ENCODE measurements at regions of chr19 and their contacts with region 1.

Region 1: DNA sequence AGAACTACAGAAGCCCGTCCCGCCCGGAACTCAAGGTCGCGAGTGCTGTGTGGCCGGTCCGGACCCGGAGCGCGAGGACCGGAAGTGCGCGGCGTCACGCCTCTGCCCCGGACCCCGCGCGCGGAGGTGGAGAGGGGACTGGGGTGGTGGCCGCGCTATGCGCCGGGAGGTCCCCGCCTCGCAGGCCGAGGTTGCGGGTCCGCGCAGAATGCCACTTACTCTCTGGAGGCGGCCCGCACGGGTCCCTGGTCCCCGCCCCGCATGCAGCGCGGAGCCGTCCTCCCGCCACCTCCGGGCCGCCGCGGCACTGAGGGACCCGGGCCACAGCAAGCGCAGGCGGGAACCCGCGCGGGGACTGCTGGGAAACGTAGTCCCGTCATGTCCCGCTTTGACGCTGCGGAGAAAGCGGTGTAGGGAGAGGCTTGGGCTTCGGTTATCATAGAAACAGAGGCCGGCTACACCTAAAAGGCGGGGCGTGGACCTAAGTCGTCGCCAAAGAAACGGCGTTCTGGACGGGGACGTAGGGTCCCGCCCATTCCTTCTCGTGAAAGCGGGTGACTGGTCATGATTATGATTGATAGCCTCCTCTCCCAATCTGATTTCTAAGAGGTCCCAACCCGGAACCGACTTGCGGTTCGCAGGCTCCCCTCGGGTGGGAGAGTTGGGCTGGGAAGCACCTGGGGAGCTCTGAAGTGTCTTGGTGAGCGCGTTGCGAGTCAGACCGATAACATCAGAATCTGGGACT is at the start of gene ZNF837:
- DNase-seq: peak; percentile 98 to 100
- H3K4me3 ChIP-seq: peak within 1 kb of the TSS; percentile 66 to 90
- H3K27ac ChIP-seq: peak within 1 kb of the TSS; percentile 87 to 95
- H3K4me1 ChIP-seq: peaks cover 6 to 33% (median 29%) of the 10 kb centered on the region in 4 donors
- H3K27me3 ChIP-seq: no peaks in the 10 kb centered on the region
- CTCF ChIP-seq: peak in 1 of 2 experiments; percentile 30

Region 2: DNA sequence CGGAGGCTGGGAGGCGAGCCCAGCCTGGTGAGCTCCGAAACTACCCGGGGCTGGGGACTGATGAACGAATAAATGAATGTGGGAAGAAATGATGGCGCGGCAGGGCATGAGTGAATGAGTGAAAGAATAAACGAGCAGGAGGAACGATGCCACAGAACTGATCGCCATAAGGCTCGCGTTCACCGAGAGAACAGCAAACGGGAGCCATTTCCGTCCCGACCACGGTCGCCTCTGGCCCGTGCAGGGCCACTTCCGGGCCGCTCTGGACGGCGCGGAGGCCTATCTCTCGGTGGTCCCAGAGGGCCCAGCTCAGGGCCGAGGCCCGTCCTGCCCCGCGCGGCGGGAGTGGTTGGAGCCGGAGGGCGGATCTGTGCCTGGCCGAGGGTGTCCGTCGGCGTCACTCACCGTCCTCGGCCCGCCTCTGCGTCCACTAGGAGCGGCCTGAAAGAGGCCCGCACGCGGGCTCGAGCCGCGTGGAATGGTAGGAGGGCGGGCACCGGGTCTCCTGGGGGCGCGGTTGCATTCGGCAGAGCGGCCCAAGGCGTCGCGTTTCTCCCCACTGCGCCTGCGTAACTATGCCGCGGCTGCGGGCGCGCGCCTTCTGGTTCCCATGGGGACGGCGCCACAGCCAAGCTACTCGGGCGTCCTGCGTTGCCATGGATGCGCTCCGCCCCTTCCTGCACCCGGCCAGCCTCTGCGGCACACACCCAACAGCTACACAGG is 18.5 kb before region 1 on chr19 and contains the start of gene ZNF497:
- intact Hi-C with region 1: loop called (anchors 2 kb)
- DNase-seq: peak; percentile 95 to 98
- H3K4me3 ChIP-seq: peak within 1 kb of the TSS; percentile 72 to 73
- H3K27ac ChIP-seq: peak within 1 kb of the TSS; percentile 92 to 96
- H3K4me1 ChIP-seq: peaks cover 0 to 14% (median 6%) of the 10 kb centered on the region in 4 donors
- H3K27me3 ChIP-seq: peaks cover 0 to 24% of the 10 kb centered on the region in 2 donors
- CTCF ChIP-seq: peak in 1 of 2 experiments; percentile 20

Measured in tibial artery (tissue), 4 donors.